ENCODE measurements at regions of chr4 and their contacts with region 1.

Region 1: GRCh38 chr4:2963175-2963965 is at the starts of genes GRK4 and NOP14:
- DNase-seq: peak; percentile 89
- H3K4me3 ChIP-seq: peak within 1 kb of the TSS; percentile 74
- H3K27me3 ChIP-seq: no peaks in the 10 kb centered on the region
- CTCF ChIP-seq: peak; percentile 23; the same call in 1 of the 2 replicates
- polyA plus RNA-seq, gene GRK4: 1.9 and 2.1 TPM in 2 replicates
- polyA plus RNA-seq, gene NOP14: 7.1 and 8.2 TPM in 2 replicates

Region 2: GRCh38 chr4:2893772-2894171 is 69.6 kb before region 1 on chr4:
- CTCF ChIA-PET with region 1: no interaction called
- POLR2A ChIA-PET with region 1: no interaction called
- DNase-seq: no peak
- H3K4me3 ChIP-seq: no peak overlapping the region
- H3K27me3 ChIP-seq: no peaks in the 10 kb centered on the region
- CTCF ChIP-seq: no peak

Region 3: GRCh38 chr4:3037957-3038461 is 74.6 kb after region 1 on chr4:
- CTCF ChIA-PET with region 1: interaction called, 10 read pairs
- POLR2A ChIA-PET with region 1: no interaction called
- DNase-seq: no peak
- H3K4me3 ChIP-seq: no peak overlapping the region
- H3K27me3 ChIP-seq: peaks cover 8% of the 10 kb centered on the region
- CTCF ChIP-seq: no peak

Measured in BJ (cell line).